ENCODE measurements at regions of chr7 and their contacts with region 1.

Region 1: GRCh38 chr7:23055582-23056178 is 41.8 kb upstream of the HYCC1 start:
- DNase-seq: peak; percentile 67
- H3K4me3 Mint-ChIP-seq: no peak overlapping the region
- H3K27ac Mint-ChIP-seq: no peak overlapping the region
- H3K4me1 Mint-ChIP-seq: peaks cover 14% of the 10 kb centered on the region
- H3K27me3 Mint-ChIP-seq: no peaks in the 10 kb centered on the region

Region 2: GRCh38 chr7:22559829-22560489 is 495.7 kb before region 1 on chr7:
- CTCF ChIA-PET with region 1: interaction called, 15 read pairs
- POLR2A ChIA-PET with region 1: no interaction called
- DNase-seq: peak; percentile 78
- H3K4me3 Mint-ChIP-seq: no peak overlapping the region
- H3K27ac Mint-ChIP-seq: no peak overlapping the region
- H3K4me1 Mint-ChIP-seq: peaks cover 47% of the 10 kb centered on the region
- H3K27me3 Mint-ChIP-seq: peaks cover 18% of the 10 kb centered on the region

Region 3: DNA sequence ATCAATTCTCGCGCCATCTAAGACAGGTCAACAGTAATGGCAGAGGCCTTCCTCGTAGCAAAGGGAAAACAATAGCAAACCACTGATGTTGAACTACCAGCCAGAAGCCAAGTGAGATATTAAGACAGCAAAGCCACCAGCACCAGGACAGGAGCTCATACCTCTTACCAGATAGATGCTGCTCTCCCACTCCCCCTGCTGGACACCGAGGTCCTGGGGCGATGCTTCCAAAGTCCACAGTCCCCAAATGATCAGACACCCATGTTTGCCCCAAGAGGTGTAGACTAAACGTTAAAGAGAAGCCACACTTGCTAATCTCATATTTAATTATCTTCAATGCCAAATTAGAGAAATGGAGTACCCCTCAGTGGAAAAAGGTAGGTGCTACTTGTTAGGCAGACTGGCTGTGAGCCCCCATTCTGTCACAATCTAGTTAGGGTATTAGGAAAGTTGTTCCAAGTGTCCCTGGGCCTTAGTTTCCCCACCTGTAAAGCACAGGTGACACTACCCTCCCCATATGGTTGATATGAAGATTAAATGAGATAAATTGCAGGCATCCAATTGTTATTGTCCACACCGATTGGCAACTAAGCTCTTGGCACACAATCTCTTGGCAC is 273.0 kb before region 1 on chr7:
- CTCF ChIA-PET with region 1: interaction called, 16 read pairs
- POLR2A ChIA-PET with region 1: no interaction called
- DNase-seq: peak; percentile 78
- H3K4me3 Mint-ChIP-seq: no peak overlapping the region
- H3K27ac Mint-ChIP-seq: no peak overlapping the region
- H3K4me1 Mint-ChIP-seq: no peaks in the 10 kb centered on the region
- H3K27me3 Mint-ChIP-seq: peaks cover 13% of the 10 kb centered on the region

Region 4: DNA sequence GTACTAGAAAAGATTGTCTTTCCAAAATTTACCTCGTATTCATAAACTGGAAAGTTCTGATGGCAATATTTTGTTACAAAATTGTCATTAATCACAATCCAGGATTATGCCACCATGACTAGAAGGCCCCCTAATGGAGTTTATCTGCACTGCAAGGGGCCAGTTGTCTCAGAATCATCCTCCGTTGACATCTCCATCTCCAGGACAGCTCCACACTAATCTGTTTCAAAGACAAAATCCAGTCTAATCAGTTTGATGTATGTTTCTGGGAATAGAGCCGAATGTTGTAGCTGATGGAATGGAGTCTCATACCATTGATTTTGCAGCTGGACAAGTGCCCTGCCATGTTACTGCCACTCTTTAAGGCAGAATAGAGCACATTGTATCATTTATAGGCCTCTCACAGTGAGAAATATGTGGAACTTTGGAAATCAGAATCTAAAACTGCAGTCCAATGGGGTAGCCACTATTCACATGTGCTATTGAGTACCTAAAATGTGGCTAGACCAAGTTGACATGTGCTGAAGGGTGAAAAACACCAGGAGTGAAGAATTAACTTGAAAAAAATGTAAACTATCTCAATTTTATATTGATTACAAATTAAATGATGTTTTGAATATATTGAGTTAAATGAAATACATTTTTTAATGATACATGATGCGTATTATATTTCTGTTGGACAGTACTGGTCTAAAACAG is 194.7 kb before region 1 on chr7:
- CTCF ChIA-PET with region 1: interaction called, 21 read pairs
- POLR2A ChIA-PET with region 1: no interaction called
- DNase-seq: peak; percentile 24
- H3K4me3 Mint-ChIP-seq: no peak overlapping the region
- H3K27ac Mint-ChIP-seq: no peak overlapping the region
- H3K4me1 Mint-ChIP-seq: peaks cover 34% of the 10 kb centered on the region
- H3K27me3 Mint-ChIP-seq: no peaks in the 10 kb centered on the region

Region 5: GRCh38 chr7:22992874-22993840 is 62.5 kb before region 1 on chr7:
- CTCF ChIA-PET with region 1: interaction called, 34 read pairs
- POLR2A ChIA-PET with region 1: interaction called, 5 read pairs
- DNase-seq: peak; percentile 49
- H3K4me3 Mint-ChIP-seq: no peak overlapping the region
- H3K27ac Mint-ChIP-seq: peak overlapping the region; percentile 40
- H3K4me1 Mint-ChIP-seq: peaks cover 67% of the 10 kb centered on the region
- H3K27me3 Mint-ChIP-seq: no peaks in the 10 kb centered on the region

Region 6: GRCh38 chr7:23013715-23014649 is 41.7 kb before region 1 on chr7 and contains the start of gene HYCC1:
- CTCF ChIA-PET with region 1: interaction called, 18 read pairs
- POLR2A ChIA-PET with region 1: interaction called, 5 read pairs
- DNase-seq: peak; percentile 99
- H3K4me3 Mint-ChIP-seq: peak within 1 kb of the TSS; percentile 93
- H3K27ac Mint-ChIP-seq: peak within 1 kb of the TSS; percentile 88
- H3K4me1 Mint-ChIP-seq: peaks cover 38% of the 10 kb centered on the region
- H3K27me3 Mint-ChIP-seq: no peaks in the 10 kb centered on the region
- total RNA-seq, gene HYCC1: 103 to 105 TPM

Region 7: DNA sequence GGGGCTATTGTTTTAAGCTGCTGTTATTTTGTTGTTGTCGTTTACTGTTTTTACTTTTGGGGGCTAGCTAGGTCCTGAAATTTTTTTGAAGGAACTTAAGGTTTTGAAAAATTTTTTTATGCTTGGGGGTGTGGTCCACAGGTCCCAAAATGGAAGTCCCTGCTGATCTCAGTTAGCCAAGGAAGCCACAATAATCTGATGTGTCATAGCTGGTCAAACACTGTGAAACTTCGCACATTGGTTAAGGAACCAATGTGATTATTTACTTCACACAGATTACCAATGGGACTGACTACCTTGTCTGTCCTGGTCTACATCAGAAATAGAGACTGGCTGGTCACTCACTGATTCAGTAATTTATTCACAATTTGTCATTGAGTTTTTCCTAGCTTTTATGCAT is 12.2 kb before region 1 on chr7:
- CTCF ChIA-PET with region 1: interaction called, 19 read pairs
- POLR2A ChIA-PET with region 1: no interaction called
- DNase-seq: no peak
- H3K4me3 Mint-ChIP-seq: no peak overlapping the region
- H3K27ac Mint-ChIP-seq: no peak overlapping the region
- H3K4me1 Mint-ChIP-seq: peaks cover 8% of the 10 kb centered on the region
- H3K27me3 Mint-ChIP-seq: peaks cover 3% of the 10 kb centered on the region

Region 8: DNA sequence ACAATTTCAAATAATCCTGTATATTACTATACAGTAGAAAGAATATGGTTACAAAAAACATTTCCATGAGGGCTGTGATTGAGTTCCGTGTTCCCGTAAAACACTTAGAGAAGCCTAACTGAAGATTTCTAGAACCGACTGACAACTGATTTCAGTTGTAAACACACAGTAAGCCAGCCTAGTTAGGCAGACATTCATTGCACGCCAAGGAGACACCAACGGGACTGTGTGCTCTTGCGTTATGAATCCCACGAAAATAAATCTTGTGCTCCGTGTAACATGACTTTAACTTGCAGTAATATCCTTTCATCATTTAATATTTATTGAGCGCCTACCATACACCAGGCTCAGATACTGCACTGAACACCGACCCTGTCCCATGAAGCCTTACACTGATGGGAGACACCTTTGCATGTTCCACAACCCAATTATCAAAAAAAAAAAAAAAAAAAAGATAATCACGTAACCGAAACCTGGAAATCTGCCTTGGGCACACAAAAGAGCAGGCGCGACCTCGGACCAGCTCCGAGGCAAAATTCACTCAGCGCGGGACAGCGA is 49.5 kb after region 1 on chr7:
- CTCF ChIA-PET with region 1: no interaction called
- POLR2A ChIA-PET with region 1: no interaction called
- DNase-seq: no peak
- H3K4me3 Mint-ChIP-seq: peak overlapping the region; percentile 80
- H3K27ac Mint-ChIP-seq: peak overlapping the region; percentile 85
- H3K4me1 Mint-ChIP-seq: peaks cover 30% of the 10 kb centered on the region
- H3K27me3 Mint-ChIP-seq: no peaks in the 10 kb centered on the region

Region 9: GRCh38 chr7:23247603-23248335 is 192.1 kb after region 1 on chr7:
- CTCF ChIA-PET with region 1: no interaction called
- POLR2A ChIA-PET with region 1: no interaction called
- DNase-seq: no peak
- H3K4me3 Mint-ChIP-seq: no peak overlapping the region
- H3K27ac Mint-ChIP-seq: no peak overlapping the region
- H3K4me1 Mint-ChIP-seq: peaks cover 2% of the 10 kb centered on the region
- H3K27me3 Mint-ChIP-seq: peaks cover 77% of the 10 kb centered on the region

Measured in activated CD4-positive, alpha-beta memory T cell treated with anti-CD3 and anti-CD28 coated beads, Interleukin-2, amount 10 ng/mL, durations not matched to agents 7 days and 5 days (primary cell).